Activated T-helper 1 cell treated with anti-CD3 and anti-CD28 coated beads, Interleukin-12 subunit alpha, Interleukin-12 subunit beta, Interleukin-2, Interleukin-4 antibody, amounts not matched to agents 30 ng/mL and 10 ng/mL and 1 ng/mL, durations not matched to agents 14 hours and 24 hours and 36 hours (primary cell): ENCODE measurements at regions of chr5 and their contacts with region 1.

Region 1: GRCh38 chr5:154351566-154351965 is 94.2 kb upstream of the SAP30L start:
- DNase-seq: no peak
- H3K4me3 Mint-ChIP-seq: no peak overlapping the region
- H3K27ac Mint-ChIP-seq: no peak overlapping the region
- H3K4me1 Mint-ChIP-seq: peaks cover 30% of the 10 kb centered on the region
- H3K27me3 Mint-ChIP-seq: no peaks in the 10 kb centered on the region

Region 2: DNA sequence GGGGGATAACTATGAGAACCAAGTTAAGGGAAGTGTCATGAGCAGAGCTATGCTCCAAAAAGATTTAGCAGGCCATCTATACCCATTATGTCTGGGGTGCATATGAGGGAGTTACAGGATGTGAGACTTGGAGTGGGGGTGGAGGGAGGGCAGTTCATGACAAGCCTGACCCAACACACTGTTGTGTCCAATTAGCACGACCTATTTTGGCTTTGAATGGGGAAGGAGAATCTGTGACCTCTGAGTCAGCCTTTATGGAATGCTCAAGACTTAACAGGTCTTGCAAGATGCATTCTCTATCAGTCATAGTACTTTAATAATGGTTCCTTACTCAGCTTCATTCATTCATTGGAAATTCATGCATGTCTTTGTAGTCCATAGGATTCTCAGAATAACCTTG is 789.4 kb before region 1 on chr5:
- intact Hi-C with region 1: no loop called
- DNase-seq: no peak
- H3K4me3 Mint-ChIP-seq: no peak overlapping the region
- H3K27ac Mint-ChIP-seq: no peak overlapping the region
- H3K4me1 Mint-ChIP-seq: no peaks in the 10 kb centered on the region
- H3K27me3 Mint-ChIP-seq: no peaks in the 10 kb centered on the region

Region 3: DNA sequence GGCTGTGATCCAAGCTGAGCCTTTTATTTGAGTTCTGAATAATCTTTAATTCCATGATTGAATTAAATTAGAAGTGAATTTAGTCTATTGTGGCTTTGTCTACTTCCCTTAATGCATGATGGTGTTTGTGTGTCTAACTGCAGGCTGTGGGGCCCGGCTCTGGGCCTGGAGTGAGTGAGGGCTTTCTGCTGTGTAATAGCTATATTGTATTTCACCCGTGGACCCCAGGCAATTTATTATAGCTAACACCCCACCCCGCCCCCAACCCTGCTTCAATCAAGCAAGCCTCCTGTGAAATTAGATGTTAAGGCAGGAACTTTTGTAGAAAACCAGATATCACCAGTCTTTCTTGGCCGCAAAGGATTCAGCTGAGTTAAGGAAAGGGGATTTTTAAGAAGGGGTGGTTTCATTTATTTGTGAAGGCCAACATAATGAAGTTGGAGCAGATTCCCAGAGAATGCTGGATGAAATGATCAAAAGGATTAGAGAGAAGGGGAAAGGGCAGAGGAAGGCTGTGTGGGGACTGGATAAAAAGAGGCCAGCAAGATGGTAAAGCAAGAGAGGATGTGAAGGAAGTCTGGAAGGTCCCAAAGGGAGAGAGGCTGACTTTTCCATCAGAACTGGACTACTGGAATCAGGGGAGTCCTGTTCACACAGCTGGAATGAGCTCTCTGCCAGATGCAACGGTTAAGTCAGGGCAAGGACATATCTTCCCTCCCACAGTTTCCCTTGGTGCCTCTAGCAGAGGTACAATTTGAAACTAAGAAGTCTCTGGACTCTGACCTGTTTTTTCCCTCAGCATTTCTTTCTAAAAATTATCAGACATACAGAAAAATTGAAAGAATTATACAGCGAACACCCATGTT is 31.1 kb before region 1 on chr5:
- intact Hi-C with region 1: loop called (anchors 5 kb)
- DNase-seq: no peak
- H3K4me3 Mint-ChIP-seq: no peak overlapping the region
- H3K27ac Mint-ChIP-seq: peak overlapping the region; percentile 3
- H3K4me1 Mint-ChIP-seq: peaks cover 19% of the 10 kb centered on the region
- H3K27me3 Mint-ChIP-seq: no peaks in the 10 kb centered on the region

Region 4: DNA sequence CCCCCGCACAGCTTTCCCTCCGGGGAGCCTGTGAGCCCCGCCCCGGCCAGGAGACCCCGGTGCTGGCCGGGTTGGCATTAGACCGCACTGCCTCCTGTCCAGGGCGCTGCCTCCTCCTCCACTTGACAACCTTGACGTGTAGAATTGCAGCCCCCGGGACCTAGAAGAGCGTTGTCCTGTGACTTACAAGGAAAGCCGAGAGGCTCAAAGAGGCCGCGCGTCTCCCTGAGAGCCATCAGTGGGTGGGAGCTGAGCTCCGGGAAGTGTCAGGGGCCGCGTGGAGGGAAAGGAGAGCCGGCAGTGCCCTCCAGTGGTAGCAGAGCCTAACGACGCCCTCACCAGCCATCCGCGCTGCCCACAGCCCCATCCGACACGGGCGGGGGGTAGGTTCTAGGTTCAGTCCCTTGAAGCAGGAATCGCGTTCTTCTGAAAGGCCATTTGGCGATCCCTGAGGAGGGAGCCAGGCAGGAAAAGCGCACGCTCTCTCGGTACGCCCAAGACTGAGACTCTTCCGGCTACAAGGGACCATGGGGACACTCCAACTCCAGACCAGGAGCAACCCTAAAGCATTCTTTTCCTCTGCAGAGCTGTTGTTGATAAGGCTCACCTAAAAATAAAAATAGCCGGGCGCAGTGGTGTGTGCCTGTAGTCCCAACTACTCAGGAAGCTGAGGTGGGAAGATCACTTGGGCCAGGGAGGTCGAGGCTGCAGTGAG is 53.7 kb after region 1 on chr5:
- intact Hi-C with region 1: no loop called
- DNase-seq: peak; percentile 50
- H3K4me3 Mint-ChIP-seq: peak overlapping the region; percentile 26
- H3K27ac Mint-ChIP-seq: peak overlapping the region; percentile 40
- H3K4me1 Mint-ChIP-seq: peaks cover 7% of the 10 kb centered on the region
- H3K27me3 Mint-ChIP-seq: no peaks in the 10 kb centered on the region